Posterior cingulate gyrus (tissue), 11 donors: ENCODE measurements at regions of chr1 and their contacts with region 1.

Region 1: GRCh38 chr1:160006312-160006940 is 25.4 kb downstream of the PIGM start:
- DNase-seq: peak in 6 of 10 donors; percentile 32 to 83 (median 36)

Region 2: GRCh38 chr1:159132271-159132881 is 874.0 kb before region 1 on chr1:
- intact Hi-C with region 1: loop called (anchors 10 kb)
- DNase-seq: peak; percentile 37 to 94 (median 66)

Region 3: GRCh38 chr1:159798893-159799292 is 207.5 kb before region 1 on chr1:
- intact Hi-C with region 1: loop called (anchors 10 kb)
- DNase-seq: peak in 5 of 10 donors; percentile 36 to 84 (median 48)

Region 4: GRCh38 chr1:159936273-159936904 is 70.0 kb before region 1 on chr1:
- intact Hi-C with region 1: loop called (anchors 1 kb)
- DNase-seq: peak in 7 of 10 donors; percentile 44 to 93 (median 74)